ENCODE measurements at regions of chr7 and their contacts with region 1.

Region 1: GRCh38 chr7:5354460-5355232 is 69.0 kb downstream of the TNRC18 start:
- DNase-seq: no peak
- ATAC-seq: no peak
- H3K4me3 ChIP-seq: no peak overlapping the region
- H3K27ac ChIP-seq: no peak overlapping the region
- H3K4me1 ChIP-seq: peaks cover 0 to 6% of the 10 kb centered on the region in 2 experiments; a peak in 2 of 5 replicates
- H3K27me3 ChIP-seq: no peaks in the 10 kb centered on the region
- CTCF ChIP-seq: no peak
- EP300 ChIP-seq: no peak
- POLR2A ChIP-seq: no peak
- RAD21 ChIP-seq: no peak

Region 2: GRCh38 chr7:5218564-5219360 is 135.9 kb before region 1 on chr7:
- CTCF ChIA-PET with region 1: no interaction called
- POLR2A ChIA-PET with region 1: no interaction called
- in situ Hi-C with region 1: no loop called
- intact Hi-C with region 1: no loop called
- DNase-seq: no peak
- ATAC-seq: no peak
- H3K4me3 ChIP-seq: no peak overlapping the region
- H3K27ac ChIP-seq: no peak overlapping the region
- H3K4me1 ChIP-seq: no peaks in the 10 kb centered on the region; a peak in 1 of 5 replicates
- H3K27me3 ChIP-seq: no peaks in the 10 kb centered on the region
- CTCF ChIP-seq: no peak
- EP300 ChIP-seq: no peak
- POLR2A ChIP-seq: no peak
- RAD21 ChIP-seq: no peak

Region 3: GRCh38 chr7:5296611-5297226 is 57.9 kb before region 1 on chr7:
- CTCF ChIA-PET with region 1: no interaction called
- POLR2A ChIA-PET with region 1: no interaction called
- in situ Hi-C with region 1: no loop called
- intact Hi-C with region 1: no loop called
- DNase-seq: peak; percentile 82 to 96 (median 94)
- ATAC-seq: peak; percentile 90
- H3K4me3 ChIP-seq: peak overlapping the region; percentile 23; the same call in 1 of the 2 replicates
- H3K27ac ChIP-seq: no peak overlapping the region
- H3K4me1 ChIP-seq: peaks cover 4 to 41% of the 10 kb centered on the region in 2 experiments; a peak in 3 of 5 replicates
- H3K27me3 ChIP-seq: peaks cover 0 to 35% of the 10 kb centered on the region in 2 experiments; a peak in 3 of 5 replicates
- CTCF ChIP-seq: no peak
- EP300 ChIP-seq: no peak
- POLR2A ChIP-seq: no peak
- RAD21 ChIP-seq: no peak

Region 4: DNA sequence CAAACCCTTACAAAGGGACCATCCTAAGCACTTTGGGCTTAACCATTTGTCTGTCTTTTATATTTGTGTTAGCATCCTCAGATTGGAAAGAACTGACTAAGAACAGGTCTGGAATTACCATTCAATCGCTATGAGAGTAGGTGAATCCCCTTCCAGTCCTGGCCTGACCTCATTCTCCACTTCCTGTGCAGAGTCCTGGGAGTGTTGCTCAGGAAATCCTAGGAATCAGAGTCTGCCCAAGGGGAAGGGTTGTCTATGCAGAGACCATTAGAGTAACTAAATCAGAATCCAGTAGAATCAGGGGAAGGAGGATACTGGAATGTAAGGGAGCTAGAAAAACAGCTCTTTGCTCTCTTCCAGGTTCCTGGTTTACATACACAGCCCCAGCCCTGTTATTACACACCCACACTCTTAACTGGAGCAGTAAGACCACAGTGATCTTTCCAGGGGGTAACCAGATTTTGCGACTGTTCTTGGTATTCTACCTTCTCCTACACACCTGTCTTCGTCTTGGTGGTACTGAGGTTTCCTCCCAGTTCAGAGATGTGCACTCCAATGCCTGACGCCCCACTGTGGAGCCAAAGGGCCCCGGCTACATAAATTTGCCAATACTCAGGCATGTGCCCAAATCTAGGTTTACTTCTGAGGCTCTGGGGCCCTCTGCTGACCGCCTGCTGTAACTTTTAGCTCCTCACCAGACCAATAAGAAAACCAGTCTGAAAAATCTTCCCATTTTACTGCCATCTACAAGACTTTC is 323.1 kb after region 1 on chr7:
- CTCF ChIA-PET with region 1: no interaction called
- POLR2A ChIA-PET with region 1: no interaction called
- in situ Hi-C with region 1: loop called (anchors 10 kb)
- intact Hi-C with region 1: no loop called
- DNase-seq: peak; percentile 57 to 67 (median 62)
- ATAC-seq: peak; percentile 86
- H3K4me3 ChIP-seq: no peak overlapping the region
- H3K27ac ChIP-seq: no peak overlapping the region
- H3K4me1 ChIP-seq: peaks cover 0 to 4% of the 10 kb centered on the region in 2 experiments; a peak in 2 of 5 replicates
- H3K27me3 ChIP-seq: no peaks in the 10 kb centered on the region
- CTCF ChIP-seq: peak; percentile 71 to 79 (median 77)
- EP300 ChIP-seq: no peak
- POLR2A ChIP-seq: no peak
- RAD21 ChIP-seq: peak; percentile 63 to 79